OCI-LY7 (cell line): ENCODE measurements at regions of chr15 and their contacts with region 1.

Region 1: GRCh38 chr15:99390660-99391059 is 139.4 kb downstream of the LRRC28 start:
- DNase-seq: no peak
- H3K4me3 ChIP-seq: no peak overlapping the region
- H3K27ac ChIP-seq: no peak overlapping the region
- H3K4me1 ChIP-seq: no peaks in the 10 kb centered on the region
- CTCF ChIP-seq: 0 out of 2 replicates have a peak, but pooled peaks have one; percentile 19

Region 2: GRCh38 chr15:99409097-99409473 is 18.4 kb after region 1 on chr15:
- CTCF ChIA-PET with region 1: no interaction called
- POLR2A ChIA-PET with region 1: no interaction called
- intact Hi-C with region 1: no loop called
- DNase-seq: peak; percentile 21
- H3K4me3 ChIP-seq: no peak overlapping the region
- H3K27ac ChIP-seq: no peak overlapping the region
- H3K4me1 ChIP-seq: no peaks in the 10 kb centered on the region
- CTCF ChIP-seq: peak; percentile 48; the same call in 1 of the 2 replicates

Region 3: DNA sequence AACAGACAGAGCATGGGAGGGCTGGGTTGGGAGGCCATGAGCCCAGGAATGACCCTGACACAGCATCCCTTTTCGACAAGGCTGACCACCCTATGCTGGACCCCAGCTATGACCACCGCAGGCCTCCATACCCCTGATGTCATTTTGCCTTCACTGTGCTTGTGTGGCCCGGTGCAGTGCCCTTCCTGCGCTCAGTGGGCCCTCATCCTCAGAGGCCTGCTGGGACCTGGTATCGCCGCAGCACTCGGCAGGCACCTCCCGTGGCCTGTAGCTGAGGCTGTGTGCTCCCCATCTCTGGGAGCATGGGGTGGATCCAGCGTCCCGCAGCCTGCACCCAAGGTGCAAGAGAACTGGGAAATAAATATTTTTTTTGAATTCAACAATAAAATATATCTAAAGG is 102.1 kb after region 1 on chr15:
- CTCF ChIA-PET with region 1: interaction called, 18 read pairs
- POLR2A ChIA-PET with region 1: no interaction called
- intact Hi-C with region 1: no loop called
- DNase-seq: no peak
- H3K4me3 ChIP-seq: no peak overlapping the region
- H3K27ac ChIP-seq: no peak overlapping the region
- H3K4me1 ChIP-seq: no peaks in the 10 kb centered on the region
- CTCF ChIP-seq: no peak